OCI-LY7 (cell line): ENCODE measurements at regions of chr4 and their contacts with region 1.

Region 1: GRCh38 chr4:53196882-53197771 is 168.7 kb downstream of the SCFD2 start:
- DNase-seq: peak; percentile 80
- H3K4me3 ChIP-seq: no peak overlapping the region
- H3K27ac ChIP-seq: no peak overlapping the region
- H3K4me1 ChIP-seq: no peaks in the 10 kb centered on the region
- CTCF ChIP-seq: peak; percentile 95

Region 2: GRCh38 chr4:53804719-53805118 is 607.6 kb after region 1 on chr4:
- CTCF ChIA-PET with region 1: no interaction called
- POLR2A ChIA-PET with region 1: no interaction called
- intact Hi-C with region 1: loop called (anchors 5 kb)
- DNase-seq: peak; percentile 78
- H3K4me3 ChIP-seq: no peak overlapping the region
- H3K27ac ChIP-seq: no peak overlapping the region
- H3K4me1 ChIP-seq: no peaks in the 10 kb centered on the region
- CTCF ChIP-seq: peak; percentile 89

Region 3: GRCh38 chr4:53908661-53909078 is 711.5 kb after region 1 on chr4:
- CTCF ChIA-PET with region 1: no interaction called
- POLR2A ChIA-PET with region 1: no interaction called
- intact Hi-C with region 1: loop called (anchors 5 kb)
- DNase-seq: peak; percentile 72
- H3K4me3 ChIP-seq: no peak overlapping the region
- H3K27ac ChIP-seq: no peak overlapping the region
- H3K4me1 ChIP-seq: peaks cover 21% of the 10 kb centered on the region
- CTCF ChIP-seq: peak; percentile 91